ENCODE measurements at regions of chr6 and their contacts with region 1.

Region 1: DNA sequence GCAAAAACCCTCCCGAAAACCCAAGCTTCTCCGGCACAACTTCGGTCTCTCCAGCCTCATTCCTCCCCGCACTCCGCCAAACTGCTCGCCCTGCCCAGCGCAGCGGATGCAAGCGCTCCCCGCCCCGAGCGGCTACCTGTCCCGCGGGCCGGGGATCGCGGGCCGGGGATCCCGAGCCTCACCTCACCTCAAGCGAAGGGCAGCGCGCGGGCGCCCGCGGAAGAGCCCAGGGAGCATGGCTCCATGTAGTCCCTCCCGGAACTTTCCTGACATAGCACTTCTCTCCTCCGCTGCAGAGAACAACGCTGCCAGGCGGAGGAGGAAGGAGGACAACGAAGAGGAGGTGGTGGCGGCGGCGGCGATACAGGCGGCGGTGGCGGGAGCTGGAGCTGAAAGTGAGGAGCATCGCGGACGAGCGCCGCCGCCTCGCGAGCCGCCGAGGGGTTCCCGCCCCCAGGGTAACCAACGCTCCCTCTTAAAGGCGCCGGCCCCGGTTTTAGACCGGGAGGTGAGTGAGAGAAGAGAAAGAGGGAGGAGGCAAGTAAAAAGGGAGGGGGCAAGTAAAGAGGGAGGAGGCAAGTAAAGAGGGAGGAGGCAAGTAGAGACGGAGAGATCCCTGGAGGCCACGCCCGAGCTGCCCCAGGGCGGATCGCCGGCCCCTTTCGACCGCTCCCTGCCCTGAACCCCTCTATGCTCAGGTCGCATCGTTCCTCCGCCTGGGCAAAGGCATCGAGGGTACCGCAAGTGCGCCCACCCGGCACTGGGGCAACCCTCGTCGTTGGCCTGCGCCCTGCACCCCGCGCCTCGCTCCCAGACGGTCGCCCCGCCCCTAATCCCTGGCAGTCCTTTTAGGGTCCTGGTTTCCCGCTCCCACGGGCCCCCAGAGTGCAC is at the start of gene GPR63:
- DNase-seq: peak; percentile 36 to 84 (median 48)
- ATAC-seq: peak; percentile 83
- H3K4me3 ChIP-seq: peak within 1 kb of the TSS; percentile 59
- H3K4me3 Mint-ChIP-seq: peak within 1 kb of the TSS; percentile 86 to 97 (median 90)
- H3K27ac ChIP-seq: no peak within 1 kb of the TSS
- H3K27ac Mint-ChIP-seq: peak within 1 kb of the TSS in 6 of 9 donors; percentile 5 to 70 (median 29)
- H3K4me1 ChIP-seq: peaks cover 0 to 6% of the 10 kb centered on the region in 2 donors
- H3K4me1 Mint-ChIP-seq: peaks cover 7 to 31% (median 11%) of the 10 kb centered on the region in 7 donors
- H3K27me3 ChIP-seq: peaks cover 5 to 10% of the 10 kb centered on the region in 2 donors
- H3K27me3 Mint-ChIP-seq: peaks cover 16 to 69% (median 58%) of the 10 kb centered on the region in 5 donors
- total RNA-seq, gene GPR63: 0.24 to 3.1 (median 0.37) TPM

Region 2: DNA sequence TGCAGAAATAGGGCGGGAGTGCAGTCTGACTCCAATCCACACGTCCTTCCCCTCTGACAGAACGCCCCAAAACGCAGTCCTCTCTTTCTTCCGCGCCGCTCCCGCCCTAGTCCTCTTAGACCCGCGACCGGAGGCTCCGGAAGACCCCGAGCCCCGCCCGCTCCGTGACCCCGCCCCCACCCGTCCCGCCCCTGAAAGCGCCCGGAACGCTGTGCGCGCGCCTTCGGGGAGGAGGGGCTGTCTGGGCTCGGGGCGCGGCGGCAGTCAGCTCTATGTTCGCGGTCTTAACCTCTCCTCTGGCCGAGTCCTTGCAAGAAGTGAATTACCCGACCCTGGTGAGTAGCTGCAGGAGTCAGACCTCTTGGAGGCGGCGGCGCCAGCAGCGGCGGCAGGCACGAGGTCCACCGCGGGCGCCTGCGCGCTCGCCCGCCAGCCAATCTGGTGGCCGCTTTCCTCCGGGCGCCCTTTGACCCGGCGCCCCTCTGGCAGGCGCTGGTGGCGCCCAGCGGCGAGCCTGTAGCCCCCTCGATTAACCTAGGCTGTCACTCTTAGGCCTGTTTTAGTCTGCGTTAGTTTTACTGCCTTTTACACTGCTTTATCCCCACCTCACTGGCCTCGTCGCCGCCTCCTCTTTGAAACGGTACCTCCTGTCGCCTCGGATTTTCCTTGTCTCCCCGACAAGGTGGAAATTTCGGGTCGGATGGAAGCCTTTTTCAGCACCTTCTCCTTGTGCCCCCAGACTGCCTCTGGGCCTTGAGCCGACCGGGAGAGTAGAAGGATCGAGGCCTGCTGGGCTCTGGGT is 1259.8 kb before region 1 on chr6 and contains the start of gene MANEA:
- CTCF ChIA-PET with region 1: no interaction called
- POLR2A ChIA-PET with region 1: no interaction called
- intact Hi-C with region 1: loop called (anchors 1 to 2 kb)
- DNase-seq: peak; percentile 64 to 83 (median 79)
- ATAC-seq: peak; percentile 91
- H3K4me3 ChIP-seq: peak within 1 kb of the TSS; percentile 98
- H3K4me3 Mint-ChIP-seq: peak within 1 kb of the TSS; percentile 83 to 98 (median 96)
- H3K27ac ChIP-seq: peak within 1 kb of the TSS; percentile 80
- H3K27ac Mint-ChIP-seq: peak within 1 kb of the TSS; percentile 92 to 100 (median 97)
- H3K4me1 ChIP-seq: peaks cover 9 to 30% of the 10 kb centered on the region in 2 donors
- H3K4me1 Mint-ChIP-seq: peaks cover 28 to 71% (median 62%) of the 10 kb centered on the region in 7 donors
- H3K27me3 ChIP-seq: no peaks in the 10 kb centered on the region
- H3K27me3 Mint-ChIP-seq: no peaks in the 10 kb centered on the region
- total RNA-seq, gene MANEA: 3.8 to 25.7 (median 12.2) TPM

Region 3: GRCh38 chr6:96521644-96522464 is 315.5 kb before region 1 on chr6 and contains the start of gene UFL1:
- CTCF ChIA-PET with region 1: no interaction called
- POLR2A ChIA-PET with region 1: interaction called, 3 read pairs
- intact Hi-C with region 1: loop called (anchors 1 kb)
- DNase-seq: peak; percentile 84 to 97 (median 93)
- ATAC-seq: peak; percentile 97
- H3K4me3 ChIP-seq: peak within 1 kb of the TSS; percentile 98
- H3K4me3 Mint-ChIP-seq: peak within 1 kb of the TSS; percentile 96 to 100 (median 98)
- H3K27ac ChIP-seq: peak within 1 kb of the TSS; percentile 98
- H3K27ac Mint-ChIP-seq: peak within 1 kb of the TSS; percentile 98 to 100 (median 100)
- H3K4me1 ChIP-seq: peaks cover 13 to 19% of the 10 kb centered on the region in 2 donors
- H3K4me1 Mint-ChIP-seq: peaks cover 11 to 49% (median 35%) of the 10 kb centered on the region in 7 donors
- H3K27me3 ChIP-seq: no peaks in the 10 kb centered on the region
- H3K27me3 Mint-ChIP-seq: no peaks in the 10 kb centered on the region
- total RNA-seq, gene UFL1: 15.0 to 34.9 (median 22.2) TPM

Region 4: GRCh38 chr6:96853083-96853482 is 15.8 kb after region 1 on chr6:
- CTCF ChIA-PET with region 1: no interaction called
- POLR2A ChIA-PET with region 1: no interaction called
- intact Hi-C with region 1: no loop called
- DNase-seq: no peak
- ATAC-seq: no peak
- H3K4me3 ChIP-seq: no peak overlapping the region
- H3K4me3 Mint-ChIP-seq: no peak overlapping the region
- H3K27ac ChIP-seq: no peak overlapping the region
- H3K27ac Mint-ChIP-seq: no peak overlapping the region
- H3K4me1 ChIP-seq: no peaks in the 10 kb centered on the region
- H3K4me1 Mint-ChIP-seq: no peaks in the 10 kb centered on the region
- H3K27me3 ChIP-seq: no peaks in the 10 kb centered on the region
- H3K27me3 Mint-ChIP-seq: peaks cover 0 to 12% (median 0%) of the 10 kb centered on the region in 5 donors

Region 5: GRCh38 chr6:96889146-96889545 is 51.8 kb after region 1 on chr6:
- CTCF ChIA-PET with region 1: no interaction called
- POLR2A ChIA-PET with region 1: no interaction called
- intact Hi-C with region 1: loop called in 1 of 2 experiments (anchors 2 kb)
- DNase-seq: no peak
- ATAC-seq: no peak
- H3K4me3 ChIP-seq: no peak overlapping the region
- H3K4me3 Mint-ChIP-seq: no peak overlapping the region
- H3K27ac ChIP-seq: no peak overlapping the region
- H3K27ac Mint-ChIP-seq: no peak overlapping the region
- H3K4me1 ChIP-seq: no peaks in the 10 kb centered on the region
- H3K4me1 Mint-ChIP-seq: peaks cover 0 to 13% (median 8%) of the 10 kb centered on the region in 7 donors
- H3K27me3 ChIP-seq: no peaks in the 10 kb centered on the region
- H3K27me3 Mint-ChIP-seq: no peaks in the 10 kb centered on the region

Region 6: GRCh38 chr6:96923871-96924493 is 86.7 kb after region 1 on chr6:
- CTCF ChIA-PET with region 1: no interaction called
- POLR2A ChIA-PET with region 1: no interaction called
- intact Hi-C with region 1: loop called (anchors 1 kb)
- DNase-seq: peak in 1 of 9 donors; percentile 5
- ATAC-seq: peak; percentile 3
- H3K4me3 ChIP-seq: peak overlapping the region; percentile 68
- H3K4me3 Mint-ChIP-seq: peak overlapping the region; percentile 91 to 99 (median 98)
- H3K27ac ChIP-seq: peak overlapping the region; percentile 87
- H3K27ac Mint-ChIP-seq: peak overlapping the region; percentile 91 to 100 (median 99)
- H3K4me1 ChIP-seq: peaks cover 13 to 16% of the 10 kb centered on the region in 2 donors
- H3K4me1 Mint-ChIP-seq: peaks cover 8 to 50% (median 33%) of the 10 kb centered on the region in 7 donors
- H3K27me3 ChIP-seq: no peaks in the 10 kb centered on the region
- H3K27me3 Mint-ChIP-seq: peaks cover 0 to 22% (median 4%) of the 10 kb centered on the region in 5 donors

Region 7: GRCh38 chr6:97053643-97054411 is 216.5 kb after region 1 on chr6:
- CTCF ChIA-PET with region 1: no interaction called
- POLR2A ChIA-PET with region 1: no interaction called
- intact Hi-C with region 1: loop called in 1 of 2 experiments (anchors 2 kb)
- DNase-seq: no peak
- ATAC-seq: no peak
- H3K4me3 ChIP-seq: no peak overlapping the region
- H3K4me3 Mint-ChIP-seq: no peak overlapping the region
- H3K27ac ChIP-seq: no peak overlapping the region
- H3K27ac Mint-ChIP-seq: no peak overlapping the region
- H3K4me1 ChIP-seq: no peaks in the 10 kb centered on the region
- H3K4me1 Mint-ChIP-seq: peaks cover 0 to 13% (median 11%) of the 10 kb centered on the region in 7 donors
- H3K27me3 ChIP-seq: no peaks in the 10 kb centered on the region
- H3K27me3 Mint-ChIP-seq: peaks cover 0 to 5% (median 0%) of the 10 kb centered on the region in 5 donors

Region 8: DNA sequence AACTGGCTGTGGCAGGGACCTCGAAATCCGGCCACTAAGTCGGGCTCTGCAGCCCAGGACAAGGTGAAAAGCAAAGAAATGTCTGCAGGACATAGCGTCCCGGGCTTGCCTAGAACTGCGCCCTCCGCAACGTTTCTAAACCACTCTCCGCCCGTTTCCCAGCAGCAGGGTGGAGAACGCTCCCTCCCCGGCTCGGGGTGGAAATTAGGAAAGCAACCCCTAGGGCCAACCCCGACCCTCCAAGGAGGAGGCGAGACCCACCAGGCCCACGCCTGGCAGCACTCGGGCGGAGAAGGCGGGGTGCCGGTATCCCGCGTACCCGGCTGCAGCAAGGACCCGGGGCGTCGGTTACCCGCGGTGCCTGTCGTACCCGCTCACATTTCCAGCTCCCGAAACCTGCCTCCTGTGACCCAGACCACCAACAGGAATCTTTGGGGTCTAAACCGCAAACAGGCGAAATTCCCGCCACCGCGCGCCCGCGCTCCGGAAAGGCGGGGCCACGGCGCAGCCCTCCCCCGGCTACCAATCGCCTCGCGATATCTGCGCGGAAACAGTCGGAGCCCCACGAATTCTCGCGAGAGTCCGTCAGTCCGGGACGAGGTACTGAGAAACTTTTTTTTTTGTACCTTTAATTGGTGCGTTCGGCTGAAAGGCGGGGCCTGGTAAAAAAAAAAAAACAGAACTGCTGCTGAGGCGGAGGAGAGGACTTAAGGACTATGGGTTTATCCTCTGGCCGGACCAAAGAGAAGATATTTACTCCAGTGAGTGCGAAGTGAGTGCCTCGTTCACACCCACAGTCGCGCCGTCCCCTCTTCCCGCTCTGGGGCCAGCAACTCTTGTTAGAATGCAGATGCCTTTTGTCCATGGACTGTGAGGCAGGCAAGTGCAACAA is 445.6 kb after region 1 on chr6 and contains the start of gene MMS22L:
- CTCF ChIA-PET with region 1: no interaction called
- POLR2A ChIA-PET with region 1: no interaction called
- intact Hi-C with region 1: loop called (anchors 2 to 5 kb)
- DNase-seq: peak; percentile 83 to 93 (median 90)
- ATAC-seq: peak; percentile 99
- H3K4me3 ChIP-seq: peak within 1 kb of the TSS; percentile 90
- H3K4me3 Mint-ChIP-seq: peak within 1 kb of the TSS; percentile 90 to 98 (median 96)
- H3K27ac ChIP-seq: peak within 1 kb of the TSS; percentile 70
- H3K27ac Mint-ChIP-seq: peak within 1 kb of the TSS; percentile 83 to 96 (median 89)
- H3K4me1 ChIP-seq: peaks cover 0 to 16% of the 10 kb centered on the region in 2 donors
- H3K4me1 Mint-ChIP-seq: peaks cover 5 to 37% (median 24%) of the 10 kb centered on the region in 7 donors
- H3K27me3 ChIP-seq: no peaks in the 10 kb centered on the region
- H3K27me3 Mint-ChIP-seq: peaks cover 0 to 8% (median 0%) of the 10 kb centered on the region in 5 donors
- total RNA-seq, gene MMS22L: 11.8 to 48.1 (median 12.9) TPM